CD8-positive, alpha-beta T cell (primary cell): ENCODE measurements at regions of chr7 and their contacts with region 1.

Region 1: GRCh38 chr7:43582503-43583423 is at the start of gene STK17A:
- DNase-seq: peak; percentile 90 to 98 (median 94)
- ATAC-seq: peak; percentile 76
- H3K4me3 ChIP-seq: peak within 1 kb of the TSS; percentile 87 to 93
- H3K4me3 Mint-ChIP-seq: peak within 1 kb of the TSS; percentile 99
- H3K27ac ChIP-seq: peak within 1 kb of the TSS; percentile 81 to 97
- H3K27ac Mint-ChIP-seq: peak within 1 kb of the TSS; percentile 99
- H3K4me1 ChIP-seq: peaks cover 11% of the 10 kb centered on the region
- H3K4me1 Mint-ChIP-seq: peaks cover 16% of the 10 kb centered on the region
- H3K27me3 ChIP-seq: no peaks in the 10 kb centered on the region
- H3K27me3 Mint-ChIP-seq: no peaks in the 10 kb centered on the region
- CTCF ChIP-seq: peak; percentile 98
- total RNA-seq, gene STK17A: 301 to 311 TPM

Region 2: DNA sequence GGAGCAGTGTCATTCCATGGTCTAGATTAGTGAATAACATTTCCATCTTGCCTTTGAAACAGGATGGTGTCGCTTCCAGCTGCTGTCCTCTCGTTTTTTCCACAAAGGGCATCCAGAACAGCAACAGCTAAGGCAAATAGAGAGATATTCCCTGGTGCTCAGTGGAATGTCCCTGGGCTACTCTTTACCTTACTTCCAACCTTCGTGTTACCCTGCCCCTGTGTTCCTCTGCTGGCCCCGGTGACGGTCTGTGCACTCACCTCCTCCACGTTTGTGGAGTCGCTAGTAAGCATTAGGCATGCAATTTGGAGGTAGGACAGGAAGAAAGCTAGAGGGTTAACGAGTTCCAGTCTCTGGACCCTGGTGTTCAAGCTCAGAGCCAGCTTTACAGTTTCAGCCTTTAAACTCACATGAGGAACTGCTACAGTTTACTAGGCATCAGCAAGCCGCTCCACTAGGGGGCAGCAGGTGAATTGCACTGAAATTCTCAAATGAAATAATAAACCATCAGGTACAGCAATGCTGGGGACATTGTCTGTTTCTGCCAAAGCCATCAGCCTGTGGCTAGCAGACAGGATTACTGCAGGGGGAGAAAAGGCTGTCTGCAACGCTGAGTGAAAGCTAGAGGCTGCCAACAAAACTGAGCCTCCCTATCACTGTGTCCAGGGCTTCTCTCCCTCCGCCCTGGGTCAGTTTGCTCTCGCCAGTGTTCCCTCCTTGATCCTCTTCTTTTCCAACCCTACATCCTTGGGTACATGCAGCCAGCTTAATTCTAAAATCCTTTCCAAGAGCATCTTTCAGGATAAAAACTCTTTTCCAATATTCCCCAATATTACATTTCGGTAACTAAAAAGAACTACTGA is 641.5 kb before region 1 on chr7:
- CTCF ChIA-PET with region 1: interaction called, 3 read pairs
- POLR2A ChIA-PET with region 1: no interaction called
- intact Hi-C with region 1: loop called in 1 of 2 experiments (anchors 5 kb)
- DNase-seq: peak; percentile 53 to 80 (median 71)
- ATAC-seq: peak; percentile 80
- H3K4me3 ChIP-seq: no peak overlapping the region
- H3K4me3 Mint-ChIP-seq: no peak overlapping the region
- H3K27ac ChIP-seq: no peak overlapping the region
- H3K27ac Mint-ChIP-seq: no peak overlapping the region
- H3K4me1 ChIP-seq: no peaks in the 10 kb centered on the region
- H3K4me1 Mint-ChIP-seq: peaks cover under 1% of the 10 kb centered on the region
- H3K27me3 ChIP-seq: no peaks in the 10 kb centered on the region
- H3K27me3 Mint-ChIP-seq: no peaks in the 10 kb centered on the region
- CTCF ChIP-seq: peak; percentile 90

Region 3: GRCh38 chr7:43602271-43602670 is 19.5 kb after region 1 on chr7:
- CTCF ChIA-PET with region 1: interaction called, 23 read pairs
- POLR2A ChIA-PET with region 1: interaction called, 6 read pairs
- intact Hi-C with region 1: loop called in 1 of 2 experiments (anchors 2 kb)
- DNase-seq: no peak
- ATAC-seq: no peak
- H3K4me3 ChIP-seq: no peak overlapping the region
- H3K4me3 Mint-ChIP-seq: no peak overlapping the region
- H3K27ac ChIP-seq: peak overlapping the region in 1 of 2 experiments; percentile 40
- H3K27ac Mint-ChIP-seq: no peak overlapping the region
- H3K4me1 ChIP-seq: peaks cover 91% of the 10 kb centered on the region
- H3K4me1 Mint-ChIP-seq: peaks cover 50% of the 10 kb centered on the region
- H3K27me3 ChIP-seq: no peaks in the 10 kb centered on the region
- H3K27me3 Mint-ChIP-seq: no peaks in the 10 kb centered on the region
- CTCF ChIP-seq: no peak

Region 4: DNA sequence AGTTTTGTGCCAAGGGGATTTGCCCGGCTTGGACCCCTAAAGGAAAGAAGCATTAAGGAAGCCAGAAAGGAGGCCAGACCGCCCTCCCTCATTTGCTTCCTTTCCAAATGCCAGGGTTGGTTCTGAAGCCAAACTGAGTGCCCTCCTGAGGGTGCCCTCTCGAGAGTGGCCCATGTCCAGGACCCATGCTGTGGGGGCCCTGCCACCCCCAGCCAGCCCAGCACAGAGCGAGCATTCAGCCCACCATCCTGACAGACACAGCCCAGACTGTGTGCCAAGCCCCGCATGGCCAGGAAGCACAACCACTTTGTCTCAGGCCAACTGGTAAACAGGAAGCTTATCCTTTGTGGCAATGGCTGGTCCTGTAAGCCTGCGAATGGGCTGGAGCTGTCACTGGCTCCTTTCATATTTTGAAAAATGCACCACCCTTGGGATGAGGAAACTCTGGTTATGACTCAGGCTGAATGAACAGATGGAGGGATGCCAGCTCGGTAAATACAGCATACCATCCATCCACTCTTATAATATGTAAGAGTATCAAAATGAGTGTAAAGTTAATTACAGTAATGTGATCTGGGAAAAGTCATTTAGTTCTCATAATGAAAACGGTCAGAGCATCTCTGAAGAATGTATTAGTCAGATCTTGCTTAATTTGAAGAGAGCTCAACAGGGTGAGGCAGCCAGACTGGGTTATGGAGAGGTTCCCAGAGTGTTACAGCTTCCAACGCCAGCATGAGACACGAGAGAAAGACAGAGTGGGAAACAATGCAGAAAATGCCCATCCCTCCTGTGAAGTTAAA is 65.1 kb after region 1 on chr7:
- CTCF ChIA-PET with region 1: interaction called, 134 read pairs
- POLR2A ChIA-PET with region 1: interaction called, 151 read pairs
- intact Hi-C with region 1: loop called (anchors 1 kb)
- DNase-seq: peak in 7 of 9 experiments; percentile 42 to 72 (median 54)
- ATAC-seq: peak; percentile 13
- H3K4me3 ChIP-seq: peak overlapping the region; percentile 42 to 47
- H3K4me3 Mint-ChIP-seq: peak overlapping the region; percentile 77
- H3K27ac ChIP-seq: peak overlapping the region; percentile 75 to 83
- H3K27ac Mint-ChIP-seq: peak overlapping the region; percentile 100
- H3K4me1 ChIP-seq: peaks cover 91% of the 10 kb centered on the region
- H3K4me1 Mint-ChIP-seq: peaks cover 98% of the 10 kb centered on the region
- H3K27me3 ChIP-seq: no peaks in the 10 kb centered on the region
- H3K27me3 Mint-ChIP-seq: no peaks in the 10 kb centered on the region
- CTCF ChIP-seq: no peak

Region 5: DNA sequence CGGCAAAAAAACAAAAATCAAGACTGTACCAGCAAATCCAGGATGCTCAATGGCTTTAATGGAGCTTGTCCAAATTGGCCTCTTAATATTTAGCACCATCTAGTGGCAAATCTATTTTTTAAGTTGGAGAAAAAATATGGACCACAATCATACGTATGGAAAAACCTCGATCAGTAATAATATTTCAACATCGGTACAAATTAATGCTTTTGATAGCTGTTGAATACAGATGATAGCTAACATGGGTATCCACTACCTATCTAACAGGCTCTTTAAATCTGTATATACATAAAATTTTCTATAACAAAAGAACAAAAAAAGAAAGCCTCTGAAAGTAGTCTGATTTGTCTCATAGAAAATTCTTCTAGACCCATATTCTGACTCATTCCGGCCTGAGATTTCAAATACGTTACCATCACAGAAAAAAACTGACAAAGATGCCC is 117.3 kb after region 1 on chr7:
- CTCF ChIA-PET with region 1: interaction called, 433 read pairs
- POLR2A ChIA-PET with region 1: interaction called, 133 read pairs
- intact Hi-C with region 1: loop called (anchors 1 kb)
- DNase-seq: peak in 2 of 9 experiments; percentile 69 to 80
- ATAC-seq: peak; percentile 73
- H3K4me3 ChIP-seq: no peak overlapping the region
- H3K4me3 Mint-ChIP-seq: peak overlapping the region; percentile 50
- H3K27ac ChIP-seq: no peak overlapping the region
- H3K27ac Mint-ChIP-seq: peak overlapping the region; percentile 84
- H3K4me1 ChIP-seq: peaks cover 37% of the 10 kb centered on the region
- H3K4me1 Mint-ChIP-seq: peaks cover 44% of the 10 kb centered on the region
- H3K27me3 ChIP-seq: no peaks in the 10 kb centered on the region
- H3K27me3 Mint-ChIP-seq: no peaks in the 10 kb centered on the region
- CTCF ChIP-seq: peak; percentile 85

Region 6: DNA sequence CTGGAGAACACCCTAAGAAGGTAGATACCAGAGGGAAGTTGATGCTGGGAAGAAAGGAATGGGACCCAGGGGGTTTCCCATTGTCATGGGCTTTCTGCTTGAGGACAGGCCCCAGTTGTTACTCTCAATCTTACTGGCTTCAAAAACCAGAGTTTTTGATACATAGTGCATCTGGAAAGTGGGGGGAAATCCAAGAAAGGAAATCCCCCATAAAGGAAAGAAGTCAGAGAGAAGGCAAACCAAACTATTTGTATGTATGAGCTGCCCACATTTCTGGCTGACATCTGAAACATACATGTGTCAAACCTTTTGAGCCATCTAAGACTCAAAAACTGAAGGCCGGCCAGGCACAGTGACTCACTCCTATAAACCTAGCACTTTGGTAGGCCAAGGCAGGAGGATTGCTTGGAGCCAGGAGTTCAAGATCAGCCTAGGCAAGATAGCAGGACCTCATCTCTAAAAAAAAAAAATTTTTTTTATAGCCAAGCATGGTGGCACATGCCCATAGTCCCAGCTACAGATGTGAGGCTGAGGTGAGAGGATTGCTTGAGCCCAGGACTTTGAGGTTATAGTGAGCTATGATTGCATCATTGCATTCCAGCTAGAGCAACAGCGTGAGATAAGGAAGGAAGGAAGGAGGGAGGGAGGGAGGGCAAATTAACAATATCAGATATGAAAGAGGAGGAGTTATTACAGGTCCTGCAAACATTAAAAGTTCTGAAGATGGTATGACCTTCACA is 153.2 kb after region 1 on chr7:
- CTCF ChIA-PET with region 1: interaction called, 29 read pairs
- POLR2A ChIA-PET with region 1: no interaction called
- intact Hi-C with region 1: no loop called
- DNase-seq: peak in 1 of 9 experiments; percentile 35
- ATAC-seq: no peak
- H3K4me3 ChIP-seq: no peak overlapping the region
- H3K4me3 Mint-ChIP-seq: no peak overlapping the region
- H3K27ac ChIP-seq: no peak overlapping the region
- H3K27ac Mint-ChIP-seq: no peak overlapping the region
- H3K4me1 ChIP-seq: no peaks in the 10 kb centered on the region
- H3K4me1 Mint-ChIP-seq: no peaks in the 10 kb centered on the region
- H3K27me3 ChIP-seq: no peaks in the 10 kb centered on the region
- H3K27me3 Mint-ChIP-seq: no peaks in the 10 kb centered on the region
- CTCF ChIP-seq: no peak

Region 7: DNA sequence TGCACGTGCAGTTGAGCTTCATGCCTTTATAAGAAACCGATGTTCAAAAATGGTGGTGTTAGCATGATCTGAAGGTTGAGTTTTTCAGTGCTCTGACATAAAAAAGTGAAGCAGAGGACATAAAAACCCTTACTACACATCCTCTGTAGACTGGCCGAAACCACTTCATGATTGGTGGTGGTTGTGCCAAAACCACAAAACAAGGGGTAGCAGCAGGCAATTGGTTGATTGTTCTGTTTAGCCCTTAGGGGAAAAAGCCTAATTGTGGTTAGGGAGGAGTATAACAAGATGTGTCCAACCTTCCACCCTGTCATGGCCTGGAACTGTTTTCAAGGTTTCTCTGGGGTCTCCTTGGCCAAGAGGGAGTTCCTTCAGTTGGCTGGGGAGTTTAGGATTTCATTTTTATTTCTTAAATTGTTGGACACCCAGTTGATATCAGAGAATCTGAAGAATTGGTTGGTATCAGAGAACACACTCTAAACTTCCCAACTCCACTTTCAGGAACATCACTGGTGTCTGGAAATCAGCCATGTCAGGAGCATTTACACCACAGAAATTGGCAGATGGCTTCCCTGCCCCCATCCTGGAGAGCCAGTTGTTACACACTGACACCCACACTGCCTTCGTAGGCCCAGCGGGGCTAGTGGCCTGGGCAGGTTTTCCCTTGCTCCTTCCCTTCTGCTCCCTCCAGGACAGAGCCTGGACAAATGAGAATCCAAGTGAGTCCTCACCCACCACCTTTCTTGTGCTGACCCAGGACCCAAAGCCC is 267.8 kb after region 1 on chr7:
- CTCF ChIA-PET with region 1: no interaction called
- POLR2A ChIA-PET with region 1: no interaction called
- intact Hi-C with region 1: no loop called
- DNase-seq: no peak
- ATAC-seq: no peak
- H3K4me3 ChIP-seq: no peak overlapping the region
- H3K4me3 Mint-ChIP-seq: no peak overlapping the region
- H3K27ac ChIP-seq: no peak overlapping the region
- H3K27ac Mint-ChIP-seq: no peak overlapping the region
- H3K4me1 ChIP-seq: no peaks in the 10 kb centered on the region
- H3K4me1 Mint-ChIP-seq: no peaks in the 10 kb centered on the region
- H3K27me3 ChIP-seq: no peaks in the 10 kb centered on the region
- H3K27me3 Mint-ChIP-seq: peaks cover 4% of the 10 kb centered on the region
- CTCF ChIP-seq: no peak